Mammary epithelial cell (primary cell): ENCODE measurements at regions of chr14 and their contacts with region 1.

Region 1: DNA sequence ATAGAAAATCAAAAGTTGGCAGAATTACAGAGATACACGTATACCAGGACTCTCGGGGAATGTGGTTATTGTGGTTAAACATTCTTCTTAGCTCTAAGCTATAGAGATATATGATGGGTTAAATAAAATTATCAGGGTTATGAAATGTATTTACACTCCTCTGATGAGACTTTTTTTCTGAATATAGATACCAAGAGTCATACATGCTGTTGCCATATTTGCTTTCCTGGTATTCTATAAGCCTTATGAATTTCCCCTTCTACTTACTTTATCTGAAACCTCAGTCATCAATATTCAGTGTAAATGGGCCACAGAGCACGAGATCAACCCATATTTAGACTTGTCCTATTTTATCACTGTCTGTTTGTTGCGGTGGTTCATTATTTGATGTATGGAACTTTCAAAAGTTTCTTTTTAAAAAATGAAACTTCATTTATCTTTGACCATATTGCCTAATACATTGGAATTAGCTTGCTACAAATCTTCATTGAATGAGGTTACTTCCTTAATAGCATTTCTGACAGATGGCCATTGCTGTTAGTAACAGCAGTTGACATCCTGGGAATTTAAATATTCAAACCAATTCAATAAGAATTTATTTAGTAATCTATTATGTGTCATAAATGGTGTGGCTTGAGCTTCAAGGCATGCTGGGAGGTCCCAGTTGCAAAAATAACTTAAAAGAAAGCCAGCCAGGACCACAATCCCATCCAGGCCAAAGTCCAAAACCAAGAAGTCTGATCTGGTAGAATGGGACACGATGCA is 393.5 kb downstream of the PCNX1 start:
- DNase-seq: no peak
- H3K4me3 ChIP-seq: no peak overlapping the region
- H3K27ac ChIP-seq: no peak overlapping the region
- H3K4me1 ChIP-seq: no peaks in the 10 kb centered on the region
- H3K27me3 ChIP-seq: no peaks in the 10 kb centered on the region
- CTCF ChIP-seq: no peak

Region 2: DNA sequence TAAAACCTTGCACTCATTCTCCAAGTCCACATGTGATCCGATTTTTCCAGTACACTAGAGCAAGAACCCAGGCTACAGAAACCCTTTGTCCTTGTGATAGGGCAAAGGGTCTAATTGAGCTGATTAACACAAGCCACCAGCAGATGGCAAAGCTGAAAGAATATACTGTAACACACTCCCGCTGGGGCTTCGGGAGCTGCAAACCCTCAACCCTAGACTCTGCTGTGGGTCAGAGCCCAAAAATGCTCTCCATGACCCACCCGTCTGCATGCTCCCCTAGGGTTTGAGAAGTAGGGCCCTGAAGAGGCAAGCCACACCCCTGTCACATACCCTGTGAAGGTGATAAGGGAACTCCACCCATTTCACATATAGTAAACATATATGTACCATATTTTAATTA is 427.1 kb before region 1 on chr14:
- CTCF ChIA-PET with region 1: no interaction called
- dilution Hi-C with region 1: no loop called
- in situ Hi-C with region 1: no loop called
- intact Hi-C with region 1: no loop called
- DNase-seq: no peak
- H3K4me3 ChIP-seq: no peak overlapping the region
- H3K27ac ChIP-seq: no peak overlapping the region
- H3K4me1 ChIP-seq: no peaks in the 10 kb centered on the region
- H3K27me3 ChIP-seq: no peaks in the 10 kb centered on the region
- CTCF ChIP-seq: no peak

Region 3: DNA sequence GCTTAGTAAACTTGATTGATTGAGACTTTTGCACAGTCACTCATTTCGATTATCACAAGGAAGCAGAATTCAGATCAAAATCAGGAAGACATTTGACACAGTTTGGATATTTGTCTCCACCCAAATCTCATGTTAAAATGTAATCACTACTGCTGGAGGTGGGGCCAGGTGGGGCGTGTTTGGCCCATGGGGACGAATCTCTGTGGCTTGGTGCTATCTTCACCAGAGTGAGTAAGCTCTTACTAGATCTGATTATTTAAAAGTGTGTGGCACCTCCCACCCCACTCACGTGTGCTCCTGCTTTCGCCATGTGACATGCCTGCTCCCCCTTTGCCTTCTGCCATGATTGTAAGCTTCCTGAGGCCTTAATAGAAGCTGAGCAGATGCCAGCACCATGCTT is 102.1 kb before region 1 on chr14:
- CTCF ChIA-PET with region 1: no interaction called
- dilution Hi-C with region 1: loop called (anchors 5 kb)
- in situ Hi-C with region 1: no loop called
- intact Hi-C with region 1: no loop called
- DNase-seq: no peak
- H3K4me3 ChIP-seq: no peak overlapping the region
- H3K27ac ChIP-seq: no peak overlapping the region
- H3K4me1 ChIP-seq: no peaks in the 10 kb centered on the region
- H3K27me3 ChIP-seq: no peaks in the 10 kb centered on the region
- CTCF ChIP-seq: no peak

Region 4: DNA sequence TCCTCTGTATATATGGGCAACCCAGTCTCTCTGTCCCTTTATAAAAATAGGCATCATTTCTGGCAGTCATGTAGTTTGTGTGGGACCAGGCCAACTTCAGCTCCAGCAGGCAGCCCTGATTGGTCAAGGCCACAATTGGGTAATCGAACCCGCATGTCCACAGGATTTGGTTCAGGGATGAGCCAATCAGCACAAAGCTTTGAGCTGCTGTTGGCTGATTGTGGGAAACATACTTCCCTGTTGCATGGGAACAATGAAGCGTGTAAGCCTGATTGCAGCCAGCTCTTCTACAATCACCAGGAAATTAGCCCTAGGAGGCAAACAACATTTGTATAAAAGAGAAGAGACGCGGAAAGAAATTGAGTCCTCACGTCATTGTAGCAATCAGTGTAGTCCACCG is 64.9 kb before region 1 on chr14:
- CTCF ChIA-PET with region 1: no interaction called
- dilution Hi-C with region 1: no loop called
- in situ Hi-C with region 1: no loop called
- intact Hi-C with region 1: no loop called
- DNase-seq: no peak
- H3K4me3 ChIP-seq: no peak overlapping the region
- H3K27ac ChIP-seq: no peak overlapping the region
- H3K4me1 ChIP-seq: no peaks in the 10 kb centered on the region
- H3K27me3 ChIP-seq: no peaks in the 10 kb centered on the region
- CTCF ChIP-seq: no peak

Region 5: DNA sequence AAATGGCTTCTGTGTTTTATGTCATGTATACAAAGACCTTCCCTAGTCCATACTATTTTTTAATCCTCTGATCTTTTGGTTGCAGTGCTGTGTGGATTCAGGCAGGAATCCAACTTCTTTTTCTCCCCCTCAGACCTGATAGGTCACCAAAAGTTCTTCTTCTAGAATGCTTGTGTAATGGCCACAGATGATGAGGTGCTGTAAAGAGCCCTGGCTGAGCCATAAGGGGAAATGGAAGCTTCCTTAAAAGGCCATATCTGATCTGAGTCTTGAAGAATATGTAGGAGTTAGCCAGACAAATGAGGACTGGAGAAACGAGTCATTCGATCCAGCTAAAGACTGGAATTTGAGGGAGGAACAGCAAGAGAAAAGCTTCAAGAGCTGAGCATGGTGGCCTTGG is 39.5 kb before region 1 on chr14:
- CTCF ChIA-PET with region 1: no interaction called
- dilution Hi-C with region 1: loop called (anchors 5 kb)
- in situ Hi-C with region 1: no loop called
- intact Hi-C with region 1: no loop called
- DNase-seq: no peak
- H3K4me3 ChIP-seq: no peak overlapping the region
- H3K27ac ChIP-seq: no peak overlapping the region
- H3K4me1 ChIP-seq: no peaks in the 10 kb centered on the region
- H3K27me3 ChIP-seq: no peaks in the 10 kb centered on the region
- CTCF ChIP-seq: no peak